ENCODE measurements at regions of chr11 and their contacts with region 1.

Region 1: GRCh38 chr11:118401151-118401878 is at the start of gene ATP5MG:
- DNase-seq: peak; percentile 72
- H3K4me3 ChIP-seq: peak within 1 kb of the TSS; percentile 92
- H3K27ac ChIP-seq: peak within 1 kb of the TSS; percentile 94
- H3K27me3 ChIP-seq: no peaks in the 10 kb centered on the region
- CTCF ChIP-seq: 0 out of 2 replicates have a peak, but pooled peaks have one; percentile 20
- polyA plus RNA-seq, gene ATP5MG: 346 and 423 TPM in 2 replicates

Region 2: GRCh38 chr11:118415739-118416284 is 14.5 kb after region 1 on chr11:
- CTCF ChIA-PET with region 1: no interaction called
- POLR2A ChIA-PET with region 1: interaction called, 16 read pairs
- DNase-seq: peak; percentile 95
- H3K4me3 ChIP-seq: no peak overlapping the region
- H3K27ac ChIP-seq: no peak overlapping the region
- H3K27me3 ChIP-seq: no peaks in the 10 kb centered on the region
- CTCF ChIP-seq: no peak

Region 3: DNA sequence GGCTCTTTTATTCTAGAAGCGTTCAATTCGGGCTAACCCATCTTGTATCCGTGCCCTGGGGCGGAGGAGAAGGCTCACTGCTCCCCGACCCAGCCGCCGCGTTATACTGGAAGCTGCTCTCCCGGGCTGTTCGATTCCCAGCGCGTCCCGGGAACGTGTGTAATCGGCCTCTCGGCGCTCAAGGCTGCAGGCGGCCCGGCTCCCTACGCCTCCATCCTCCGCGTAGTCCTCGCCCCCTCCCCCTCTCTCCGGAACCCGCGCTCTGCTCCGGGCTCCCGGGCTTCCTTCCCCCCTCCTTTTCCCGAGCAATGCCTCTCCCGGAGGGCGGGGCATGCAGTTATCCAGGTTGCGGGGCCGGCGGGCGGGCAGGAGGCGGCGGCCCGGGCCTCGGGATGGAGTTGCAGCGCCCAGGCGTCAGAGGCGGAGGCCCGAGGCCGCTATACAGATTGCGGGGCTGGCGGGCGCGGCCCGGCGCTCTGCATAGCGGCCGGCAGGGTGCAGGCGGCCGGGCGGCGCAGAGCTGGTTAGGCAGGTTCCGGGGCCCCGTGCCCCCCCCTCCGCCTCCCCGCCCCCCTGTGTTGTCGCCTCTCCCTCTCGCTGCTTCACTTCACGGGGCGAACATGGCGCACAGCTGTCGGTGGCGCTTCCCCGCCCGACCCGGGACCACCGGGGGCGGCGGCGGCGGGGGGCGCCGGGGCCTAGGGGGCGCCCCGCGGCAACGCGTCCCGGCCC is 34.7 kb after region 1 on chr11 and contains the start of gene KMT2A:
- CTCF ChIA-PET with region 1: interaction called, 3 read pairs
- POLR2A ChIA-PET with region 1: interaction called, 24 read pairs
- DNase-seq: peak; percentile 91
- H3K4me3 ChIP-seq: peak within 1 kb of the TSS; percentile 78
- H3K27ac ChIP-seq: peak within 1 kb of the TSS; percentile 78
- H3K27me3 ChIP-seq: no peaks in the 10 kb centered on the region
- CTCF ChIP-seq: no peak
- polyA plus RNA-seq, gene KMT2A: 23.6 and 28.7 TPM in 2 replicates

Region 4: GRCh38 chr11:118448294-118448693 is 47.0 kb after region 1 on chr11:
- CTCF ChIA-PET with region 1: no interaction called
- POLR2A ChIA-PET with region 1: no interaction called
- DNase-seq: no peak
- H3K4me3 ChIP-seq: no peak overlapping the region
- H3K27ac ChIP-seq: no peak overlapping the region
- H3K27me3 ChIP-seq: no peaks in the 10 kb centered on the region
- CTCF ChIP-seq: no peak

Region 5: DNA sequence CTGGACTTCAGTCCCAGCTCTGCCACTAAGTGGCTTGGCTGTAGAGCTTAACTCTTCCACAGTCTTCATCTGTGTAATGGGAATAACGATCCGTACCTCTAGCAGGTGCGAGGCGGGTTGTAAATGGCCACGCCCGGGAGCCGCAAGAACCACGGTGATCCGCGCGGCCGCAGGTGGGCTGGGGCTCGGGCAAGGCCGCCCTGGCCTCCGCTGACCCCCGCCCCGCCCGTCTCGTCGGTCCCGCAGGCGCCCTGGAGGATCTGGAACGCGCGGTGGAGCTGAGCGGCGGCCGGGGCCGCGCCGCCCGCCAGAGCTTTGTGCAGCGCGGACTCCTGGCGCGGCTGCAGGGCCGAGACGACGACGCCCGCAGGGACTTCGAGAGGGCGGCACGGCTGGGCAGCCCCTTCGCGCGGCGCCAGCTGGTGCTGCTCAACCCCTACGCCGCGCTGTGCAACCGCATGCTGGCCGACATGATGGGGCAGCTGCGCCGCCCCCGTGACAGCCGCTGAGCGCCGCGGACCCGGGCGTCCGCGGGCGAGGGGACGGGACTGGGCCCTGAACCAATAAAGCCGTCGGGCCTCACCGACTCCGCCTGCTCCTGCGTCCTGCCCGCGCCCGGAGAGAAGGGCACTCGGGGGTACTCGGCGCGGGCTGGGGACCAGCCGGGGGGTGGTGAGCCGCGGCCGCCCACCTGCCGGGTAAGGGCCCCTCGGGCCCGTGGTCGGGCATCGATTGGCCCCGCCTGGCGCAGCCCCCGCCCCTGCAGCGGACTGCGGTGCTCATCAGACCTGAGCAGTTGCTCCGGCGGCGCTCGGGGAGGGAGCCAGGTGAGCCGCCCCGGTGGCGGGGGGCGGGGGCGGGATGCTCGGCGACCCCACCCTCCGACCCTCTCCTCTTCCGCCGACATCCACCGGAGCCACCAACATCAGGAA is 129.4 kb after region 1 on chr11 and contains the start of gene TMEM25:
- CTCF ChIA-PET with region 1: no interaction called
- POLR2A ChIA-PET with region 1: no interaction called
- DNase-seq: no peak
- H3K4me3 ChIP-seq: peak within 1 kb of the TSS; percentile 82
- H3K27ac ChIP-seq: no peak within 1 kb of the TSS
- H3K27me3 ChIP-seq: no peaks in the 10 kb centered on the region
- CTCF ChIP-seq: no peak
- polyA plus RNA-seq, gene TMEM25: 22.5 and 26.1 TPM in 2 replicates

Measured in AG04450 (cell line).